Activated CD4-positive, alpha-beta T cell treated with anti-CD3 and anti-CD28 coated beads, Interleukin-2, amount 10 ng/mL, durations not matched to agents 24 days and 14 days (primary cell): ENCODE measurements at regions of chr11 and their contacts with region 1.

Region 1: DNA sequence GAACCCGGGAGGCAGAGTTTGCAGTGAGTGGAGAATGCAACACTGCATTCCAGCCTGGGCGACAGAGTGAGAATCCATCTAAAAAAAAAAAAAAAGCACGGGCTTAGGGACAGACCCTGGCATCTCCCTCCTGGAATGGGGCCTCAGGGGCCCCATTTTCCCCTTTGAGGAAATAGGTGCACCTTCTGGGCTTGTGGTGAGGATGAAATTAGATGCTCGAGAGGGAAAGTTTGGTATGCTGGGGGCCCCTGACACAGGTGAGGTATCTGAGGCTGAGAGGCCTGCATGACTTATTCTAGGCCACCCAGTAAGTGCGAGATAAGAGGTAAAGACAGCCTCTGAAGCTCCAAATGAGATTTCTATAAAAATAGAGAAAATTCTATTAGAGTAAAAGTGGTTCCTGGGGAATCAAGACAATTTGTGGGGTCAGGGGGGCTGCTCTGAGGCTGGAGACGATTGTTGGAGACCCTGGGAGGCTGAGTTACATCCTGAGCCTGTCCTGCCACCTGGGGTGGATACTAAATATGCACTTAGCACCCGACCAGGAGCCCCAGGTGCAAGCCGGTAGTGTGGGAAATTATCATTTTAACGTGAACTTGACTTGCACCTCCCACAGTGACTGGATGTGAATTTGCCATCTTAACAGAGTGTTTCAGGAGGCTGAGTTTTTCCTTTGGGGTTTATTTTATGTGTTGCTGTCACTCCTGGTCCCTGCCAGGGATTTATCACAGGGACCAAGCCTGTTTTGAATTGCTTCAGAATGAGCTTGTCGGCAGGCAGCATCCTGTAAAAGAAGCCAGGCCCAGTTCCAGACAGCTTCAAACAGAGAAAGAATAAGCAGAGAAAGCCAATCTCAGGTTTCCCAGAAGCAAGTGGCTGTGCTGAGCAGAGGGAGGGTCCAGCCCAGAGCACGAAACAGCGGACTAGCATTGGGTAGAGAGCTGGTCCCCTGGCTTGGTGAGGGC is 48.4 kb upstream of the TSKU start:
- DNase-seq: no peak
- H3K4me3 Mint-ChIP-seq: no peak overlapping the region
- H3K27ac Mint-ChIP-seq: no peak overlapping the region
- H3K4me1 Mint-ChIP-seq: no peaks in the 10 kb centered on the region
- H3K27me3 Mint-ChIP-seq: no peaks in the 10 kb centered on the region

Region 2: GRCh38 chr11:76444384-76445123 is 290.2 kb before region 1 on chr11 and contains the start of gene EMSY:
- intact Hi-C with region 1: no loop called
- DNase-seq: peak; percentile 97
- H3K4me3 Mint-ChIP-seq: peak within 1 kb of the TSS; percentile 97
- H3K27ac Mint-ChIP-seq: peak within 1 kb of the TSS; percentile 97
- H3K4me1 Mint-ChIP-seq: peaks cover 26% of the 10 kb centered on the region
- H3K27me3 Mint-ChIP-seq: no peaks in the 10 kb centered on the region
- total RNA-seq, gene EMSY: 32.1 and 33.2 TPM in 2 replicates

Region 3: GRCh38 chr11:76566831-76567230 is 167.9 kb before region 1 on chr11:
- intact Hi-C with region 1: no loop called
- DNase-seq: peak; percentile 73
- H3K4me3 Mint-ChIP-seq: no peak overlapping the region
- H3K27ac Mint-ChIP-seq: peak overlapping the region; percentile 18
- H3K4me1 Mint-ChIP-seq: peaks cover 19% of the 10 kb centered on the region
- H3K27me3 Mint-ChIP-seq: peaks cover 7% of the 10 kb centered on the region

Region 4: GRCh38 chr11:76799066-76799804 is 64.5 kb after region 1 on chr11:
- intact Hi-C with region 1: loop called (anchors 1 kb)
- DNase-seq: peak; percentile 94
- H3K4me3 Mint-ChIP-seq: peak overlapping the region; percentile 50
- H3K27ac Mint-ChIP-seq: no peak overlapping the region
- H3K4me1 Mint-ChIP-seq: peaks cover 14% of the 10 kb centered on the region
- H3K27me3 Mint-ChIP-seq: peaks cover 26% of the 10 kb centered on the region

Region 5: DNA sequence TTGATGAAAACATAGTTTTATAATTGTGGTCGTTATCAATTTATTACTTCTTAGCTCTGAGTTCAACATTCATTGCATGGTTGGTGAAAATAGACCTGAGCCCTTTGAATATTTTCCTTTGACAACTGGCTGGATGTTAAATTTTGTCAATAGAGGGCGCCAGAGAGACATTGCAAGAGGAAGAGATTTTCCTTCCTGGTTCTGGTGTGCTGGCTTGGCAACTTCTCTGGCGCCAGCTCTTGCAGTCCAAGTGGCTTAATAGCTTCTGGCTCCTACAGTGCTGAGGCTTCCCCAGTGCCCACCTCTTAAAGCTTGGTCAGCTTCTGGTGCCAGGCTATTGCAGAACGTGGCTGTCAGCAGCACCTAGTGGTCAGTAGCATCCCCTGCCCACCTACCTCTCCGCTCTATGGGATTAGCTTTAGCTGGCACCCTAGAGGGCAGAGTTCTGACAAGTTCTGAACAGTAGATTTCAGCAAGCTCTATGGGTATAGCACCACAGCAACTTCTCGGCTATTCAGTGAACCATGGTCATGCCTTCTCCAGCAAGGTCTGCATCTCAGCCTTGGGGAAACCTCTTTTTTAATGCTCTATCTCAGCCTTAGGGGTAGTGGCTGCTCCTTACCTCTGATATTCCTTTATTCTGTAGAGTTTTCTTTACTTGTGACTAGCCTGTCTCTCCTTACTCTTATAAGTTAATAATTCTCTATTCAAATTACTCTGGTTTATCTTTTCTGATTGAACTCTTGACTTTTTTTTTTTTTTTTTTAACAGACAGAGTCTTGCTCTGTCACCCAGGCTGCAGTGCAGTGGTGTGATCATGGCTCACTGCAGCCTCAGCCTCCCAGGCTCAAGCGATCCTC is 185.4 kb after region 1 on chr11:
- intact Hi-C with region 1: loop called (anchors 1 kb)
- DNase-seq: peak; percentile 91
- H3K4me3 Mint-ChIP-seq: peak overlapping the region; percentile 34
- H3K27ac Mint-ChIP-seq: no peak overlapping the region
- H3K4me1 Mint-ChIP-seq: peaks cover 6% of the 10 kb centered on the region
- H3K27me3 Mint-ChIP-seq: peaks cover 7% of the 10 kb centered on the region

Region 6: GRCh38 chr11:77091146-77091940 is 356.6 kb after region 1 on chr11:
- intact Hi-C with region 1: loop called (anchors 1 kb)
- DNase-seq: peak; percentile 94
- H3K4me3 Mint-ChIP-seq: no peak overlapping the region
- H3K27ac Mint-ChIP-seq: no peak overlapping the region
- H3K4me1 Mint-ChIP-seq: peaks cover 5% of the 10 kb centered on the region
- H3K27me3 Mint-ChIP-seq: no peaks in the 10 kb centered on the region